Activated B cell treated with CpG ODN at 0.5 μM for 24 hours (primary cell): ENCODE measurements at regions of chr2 and their contacts with region 1.

Region 1: GRCh38 chr2:54054271-54054670 is 61.1 kb upstream of the ACYP2 start:
- DNase-seq: no peak
- ATAC-seq: no peak
- H3K4me3 Mint-ChIP-seq: peak overlapping the region; percentile 37
- H3K27ac Mint-ChIP-seq: peak overlapping the region; percentile 82
- H3K4me1 Mint-ChIP-seq: peaks cover 32% of the 10 kb centered on the region
- H3K27me3 Mint-ChIP-seq: no peaks in the 10 kb centered on the region
- CTCF ChIP-seq: no peak

Region 2: DNA sequence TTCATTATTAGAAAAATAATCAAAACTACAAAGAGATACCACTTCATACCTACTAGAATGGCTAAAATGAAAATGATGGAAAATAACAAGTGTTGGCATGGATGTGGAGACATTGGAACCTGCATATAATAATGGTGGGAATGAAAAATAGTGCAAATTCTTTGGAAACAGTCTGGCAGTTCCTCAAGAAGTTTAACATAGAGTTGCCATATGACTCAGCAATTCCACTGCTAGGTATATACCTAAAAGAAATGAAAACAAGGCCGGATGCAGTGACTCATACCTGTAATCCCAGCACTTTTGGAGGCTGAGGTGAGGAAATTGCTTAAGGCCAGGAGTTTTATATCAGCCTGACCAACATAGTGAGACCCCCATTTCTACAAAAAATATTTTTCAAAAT is 19.5 kb after region 1 on chr2:
- CTCF ChIA-PET with region 1: no interaction called
- POLR2A ChIA-PET with region 1: interaction called, 4 read pairs
- intact Hi-C with region 1: loop called (anchors 2 kb)
- DNase-seq: no peak
- ATAC-seq: no peak
- H3K4me3 Mint-ChIP-seq: no peak overlapping the region
- H3K27ac Mint-ChIP-seq: no peak overlapping the region
- H3K4me1 Mint-ChIP-seq: peaks cover 18% of the 10 kb centered on the region
- H3K27me3 Mint-ChIP-seq: no peaks in the 10 kb centered on the region
- CTCF ChIP-seq: no peak

Region 3: GRCh38 chr2:55590810-55591440 is 1536.7 kb after region 1 on chr2:
- CTCF ChIA-PET with region 1: no interaction called
- POLR2A ChIA-PET with region 1: no interaction called
- intact Hi-C with region 1: no loop called
- DNase-seq: no peak
- ATAC-seq: peak; percentile 66
- H3K4me3 Mint-ChIP-seq: no peak overlapping the region
- H3K27ac Mint-ChIP-seq: no peak overlapping the region
- H3K4me1 Mint-ChIP-seq: peaks cover 11% of the 10 kb centered on the region
- H3K27me3 Mint-ChIP-seq: no peaks in the 10 kb centered on the region
- CTCF ChIP-seq: no peak